Posterior vena cava (tissue), 2 donors: ENCODE measurements at regions of chr14 and their contacts with region 1.

Region 1: DNA sequence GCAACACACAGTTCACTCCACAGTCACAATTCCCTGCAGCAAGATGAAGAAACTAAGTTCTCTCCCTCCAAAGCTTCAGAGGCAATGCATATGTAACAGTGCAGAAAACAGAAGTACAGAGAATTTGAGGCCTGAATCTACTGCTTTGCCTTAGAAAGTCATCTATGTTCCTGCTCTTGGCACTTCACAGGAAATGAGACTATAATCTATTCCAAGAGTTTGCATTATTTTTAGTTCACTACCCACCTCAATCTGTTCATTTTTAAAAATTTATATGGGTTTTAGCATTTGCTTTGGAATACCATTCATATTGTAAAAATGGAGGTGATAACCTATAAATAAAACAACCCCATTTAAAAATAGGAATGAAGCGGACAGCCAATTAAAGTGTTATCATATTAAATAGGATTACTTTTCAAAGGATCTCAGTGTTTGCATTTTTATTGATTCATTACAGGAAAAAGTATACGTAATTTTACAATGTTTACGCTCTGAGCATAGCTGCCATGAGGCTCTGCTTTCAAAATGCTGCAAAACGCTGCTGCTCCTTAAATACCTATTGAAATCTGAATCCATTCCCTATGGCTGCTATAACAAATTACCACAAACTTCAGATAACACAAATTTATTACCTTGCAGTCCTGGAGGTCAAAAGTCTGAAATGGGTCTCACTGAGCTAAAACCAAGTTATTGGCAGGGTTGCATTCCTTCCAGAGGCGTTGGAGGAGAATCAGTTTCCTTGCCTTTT is 60.0 kb downstream of the ARMH4 start:
- DNase-seq: no peak

Region 2: GRCh38 chr14:56555921-56556570 is 1536.0 kb before region 1 on chr14:
- intact Hi-C with region 1: no loop called
- DNase-seq: no peak

Region 3: GRCh38 chr14:57293866-57294837 is 797.9 kb before region 1 on chr14:
- intact Hi-C with region 1: loop called in 1 of 2 experiments (anchors 5 kb)
- DNase-seq: no peak

Region 4: GRCh38 chr14:58107947-58108552 is 16.0 kb after region 1 on chr14:
- intact Hi-C with region 1: no loop called
- DNase-seq: no peak